ENCODE measurements at regions of chr18 and their contacts with region 1.

Region 1: GRCh38 chr18:9259173-9259572 is 75.4 kb upstream of the TWSG1 start:
- DNase-seq: no peak
- H3K4me3 ChIP-seq: no peak overlapping the region
- H3K27ac ChIP-seq: no peak overlapping the region
- H3K4me1 ChIP-seq: no peaks in the 10 kb centered on the region
- H3K27me3 ChIP-seq: no peaks in the 10 kb centered on the region
- CTCF ChIP-seq: no peak

Region 2: GRCh38 chr18:9184998-9185613 is 74.1 kb before region 1 on chr18:
- CTCF ChIA-PET with region 1: no interaction called
- dilution Hi-C with region 1: loop called (anchors 5 kb)
- in situ Hi-C with region 1: loop called in 1 of 2 experiments (anchors 10 kb)
- intact Hi-C with region 1: no loop called
- DNase-seq: no peak
- H3K4me3 ChIP-seq: no peak overlapping the region
- H3K27ac ChIP-seq: no peak overlapping the region
- H3K4me1 ChIP-seq: no peaks in the 10 kb centered on the region
- H3K27me3 ChIP-seq: no peaks in the 10 kb centered on the region
- CTCF ChIP-seq: no peak

Region 3: DNA sequence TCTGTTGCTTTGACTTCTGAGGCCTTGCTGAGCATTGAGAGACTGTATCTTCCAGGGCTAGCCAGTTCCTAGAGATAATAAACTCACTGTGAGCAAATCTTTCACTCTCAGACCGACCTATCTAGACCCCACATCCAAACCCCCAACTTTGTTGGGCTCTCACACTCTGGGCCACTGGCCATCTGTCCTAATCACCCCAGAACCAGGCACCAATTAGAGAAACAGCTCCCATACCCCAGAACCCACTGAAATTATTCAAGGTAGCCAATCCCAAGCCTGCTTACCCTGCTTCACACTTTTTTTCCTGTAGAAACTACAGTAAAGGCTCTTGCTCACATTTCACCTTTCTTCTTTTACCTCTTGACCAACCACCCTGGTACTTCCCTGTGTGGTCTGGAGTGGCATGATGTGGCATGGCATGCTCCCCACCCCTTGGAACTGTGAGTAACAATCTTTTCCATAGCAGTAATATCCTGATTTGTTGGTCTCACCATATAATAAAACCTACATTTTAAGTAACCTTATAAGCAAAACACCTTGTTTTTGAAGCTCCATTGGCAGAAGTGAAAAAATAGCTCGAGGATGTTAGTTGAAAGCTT is 67.4 kb before region 1 on chr18:
- CTCF ChIA-PET with region 1: no interaction called
- dilution Hi-C with region 1: loop called (anchors 5 kb)
- in situ Hi-C with region 1: loop called in 1 of 2 experiments (anchors 10 kb)
- intact Hi-C with region 1: no loop called
- DNase-seq: peak; percentile 60
- H3K4me3 ChIP-seq: no peak overlapping the region
- H3K27ac ChIP-seq: no peak overlapping the region
- H3K4me1 ChIP-seq: no peaks in the 10 kb centered on the region
- H3K27me3 ChIP-seq: no peaks in the 10 kb centered on the region
- CTCF ChIP-seq: no peak

Region 4: DNA sequence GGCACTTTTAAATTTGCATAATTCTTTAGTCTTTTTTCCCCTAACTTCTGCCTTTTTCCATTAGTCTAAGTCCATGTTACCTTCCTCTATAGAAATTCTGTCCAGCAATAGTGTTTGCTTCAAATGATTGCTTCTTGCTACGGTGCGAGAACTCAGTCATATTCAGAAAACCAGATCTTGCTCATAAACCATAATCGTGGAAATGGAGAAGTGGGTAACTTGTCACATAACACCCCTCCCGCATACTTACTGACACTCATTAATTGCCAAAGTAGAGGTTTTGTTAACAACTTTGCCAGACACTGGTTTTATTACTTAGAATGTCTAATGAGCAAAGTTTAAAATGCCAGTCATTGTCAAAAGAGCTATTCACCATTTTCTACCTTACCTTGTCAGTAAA is 18.9 kb before region 1 on chr18:
- CTCF ChIA-PET with region 1: no interaction called
- dilution Hi-C with region 1: no loop called
- in situ Hi-C with region 1: no loop called
- intact Hi-C with region 1: no loop called
- DNase-seq: no peak
- H3K4me3 ChIP-seq: no peak overlapping the region
- H3K27ac ChIP-seq: no peak overlapping the region
- H3K4me1 ChIP-seq: no peaks in the 10 kb centered on the region
- H3K27me3 ChIP-seq: no peaks in the 10 kb centered on the region
- CTCF ChIP-seq: no peak

Region 5: DNA sequence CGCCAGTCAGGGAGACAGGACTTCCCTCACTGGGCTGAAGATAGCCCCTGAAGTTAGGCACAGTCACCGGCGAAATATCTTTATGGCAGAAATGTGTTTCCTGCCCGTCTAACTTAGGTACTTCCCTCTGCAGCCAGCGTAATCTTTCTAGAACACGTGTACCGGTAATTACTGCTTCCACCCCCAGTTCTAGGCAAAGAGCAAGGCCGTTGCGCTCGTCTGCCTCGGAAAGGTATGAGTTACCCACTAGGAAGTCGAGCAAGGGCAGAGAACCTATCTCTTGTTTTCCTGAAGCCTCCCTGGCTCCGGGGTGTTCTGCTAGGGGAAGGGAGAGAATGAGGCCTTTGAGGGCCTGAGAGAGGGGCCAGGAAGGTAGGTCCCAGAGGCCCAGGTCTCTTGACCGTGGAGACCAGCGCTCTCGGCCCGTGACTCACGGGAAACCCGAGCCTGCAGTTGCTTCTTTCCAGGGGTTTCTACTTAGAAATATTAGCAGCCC is 145.4 kb after region 1 on chr18:
- CTCF ChIA-PET with region 1: no interaction called
- dilution Hi-C with region 1: no loop called
- in situ Hi-C with region 1: no loop called
- intact Hi-C with region 1: no loop called
- DNase-seq: no peak
- H3K4me3 ChIP-seq: no peak overlapping the region
- H3K27ac ChIP-seq: no peak overlapping the region
- H3K4me1 ChIP-seq: peaks cover 4% of the 10 kb centered on the region
- H3K27me3 ChIP-seq: no peaks in the 10 kb centered on the region
- CTCF ChIP-seq: no peak

Measured in mammary epithelial cell (primary cell).